MCF 10A (cell line): ENCODE measurements at regions of chr1 and their contacts with region 1.

Region 1: DNA sequence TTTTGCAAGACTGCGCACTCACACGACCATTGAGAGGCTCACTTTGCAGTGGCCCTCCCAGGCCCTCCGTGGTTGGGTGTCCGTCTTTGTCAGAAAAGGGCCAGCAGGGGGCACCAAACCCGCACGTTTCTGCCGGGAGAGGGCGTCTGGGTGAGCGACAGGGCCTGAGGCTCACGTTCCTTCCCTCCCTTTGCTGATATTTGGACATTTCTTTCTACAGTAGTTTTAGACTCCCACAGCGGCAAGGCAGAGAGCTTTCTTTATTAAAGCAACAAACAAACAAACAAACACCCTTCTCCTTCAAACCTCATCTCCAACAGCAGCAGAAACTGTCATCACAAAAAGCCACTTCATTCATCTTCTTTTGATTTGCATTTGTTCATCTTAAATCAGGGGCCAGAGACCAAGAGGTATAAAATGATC is 79.2 kb upstream of the WDR26 start:
- DNase-seq: peak; percentile 97
- H3K4me3 Mint-ChIP-seq: no peak overlapping the region
- H3K27ac Mint-ChIP-seq: no peak overlapping the region
- H3K4me1 Mint-ChIP-seq: peaks cover 14% of the 10 kb centered on the region
- H3K27me3 Mint-ChIP-seq: no peaks in the 10 kb centered on the region
- CTCF ChIP-seq: peak; percentile 100

Region 2: DNA sequence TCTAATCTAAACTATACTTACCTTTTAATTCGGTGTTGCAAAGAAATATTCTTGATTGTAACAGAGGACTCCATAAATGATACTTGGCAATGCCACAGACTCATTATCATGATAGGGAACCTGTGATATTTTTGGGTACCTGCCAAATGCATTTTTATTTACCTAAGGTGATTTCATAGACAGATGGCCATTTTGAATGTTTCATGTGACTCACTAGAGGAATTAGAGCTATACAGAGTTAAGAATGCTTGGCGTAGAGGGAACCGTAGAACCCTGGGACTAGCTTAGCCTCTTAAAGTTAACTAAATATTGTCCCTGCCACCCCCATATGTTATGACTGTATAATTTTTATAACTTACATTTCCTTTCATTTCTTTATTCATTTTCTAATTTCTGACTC is 1562.9 kb before region 1 on chr1:
- CTCF ChIA-PET with region 1: no interaction called
- POLR2A ChIA-PET with region 1: no interaction called
- intact Hi-C with region 1: no loop called
- DNase-seq: peak; percentile 75
- H3K4me3 Mint-ChIP-seq: no peak overlapping the region
- H3K27ac Mint-ChIP-seq: peak overlapping the region; percentile 68
- H3K4me1 Mint-ChIP-seq: peaks cover 17% of the 10 kb centered on the region
- H3K27me3 Mint-ChIP-seq: no peaks in the 10 kb centered on the region
- CTCF ChIP-seq: no peak

Region 3: DNA sequence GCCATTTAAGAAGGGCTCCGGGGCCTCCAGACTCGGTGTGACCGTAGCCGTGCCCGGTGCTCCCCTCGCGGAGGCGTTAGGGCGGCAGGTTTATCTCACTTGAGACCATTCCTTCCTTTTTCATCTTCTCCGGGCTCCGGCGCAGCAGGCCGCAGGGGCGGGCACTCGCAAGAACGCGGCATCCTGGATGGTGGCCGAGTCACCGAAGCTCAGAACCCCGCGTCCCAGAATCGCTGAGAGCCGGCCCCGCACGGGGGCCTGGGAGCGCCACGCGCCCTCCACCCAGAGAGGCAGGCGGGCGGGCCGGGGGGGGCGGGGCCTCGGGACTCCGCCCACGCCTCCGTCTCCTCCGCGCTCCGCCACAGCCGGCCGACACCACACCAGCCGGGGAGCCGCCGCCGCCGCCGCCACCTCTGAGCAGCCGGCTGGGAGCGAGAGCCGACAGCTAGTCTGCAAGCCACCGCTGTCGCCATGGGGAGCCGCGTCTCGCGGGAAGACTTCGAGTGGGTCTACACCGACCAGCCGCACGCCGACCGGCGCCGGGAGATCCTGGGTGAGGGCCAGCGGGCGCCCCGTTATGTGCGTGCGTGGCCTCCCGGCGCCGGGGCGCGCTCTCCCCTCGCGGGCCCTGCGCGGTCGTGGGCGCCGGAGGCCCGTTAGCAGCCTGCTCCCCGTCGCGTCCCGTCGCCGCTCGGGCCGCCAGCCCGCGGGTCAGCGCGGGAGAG is 330.8 kb before region 1 on chr1 and contains the start of gene DEGS1:
- CTCF ChIA-PET with region 1: no interaction called
- POLR2A ChIA-PET with region 1: no interaction called
- intact Hi-C with region 1: no loop called
- DNase-seq: peak; percentile 94
- H3K4me3 Mint-ChIP-seq: peak within 1 kb of the TSS; percentile 85
- H3K27ac Mint-ChIP-seq: peak within 1 kb of the TSS; percentile 91
- H3K4me1 Mint-ChIP-seq: peaks cover 30% of the 10 kb centered on the region
- H3K27me3 Mint-ChIP-seq: no peaks in the 10 kb centered on the region
- CTCF ChIP-seq: no peak
- total RNA-seq, gene DEGS1: 99.1 and 118 TPM in 2 replicates

Region 4: GRCh38 chr1:224534731-224535130 is 20.9 kb after region 1 on chr1:
- CTCF ChIA-PET with region 1: interaction called, 29 read pairs
- POLR2A ChIA-PET with region 1: no interaction called
- intact Hi-C with region 1: no loop called
- DNase-seq: no peak
- H3K4me3 Mint-ChIP-seq: no peak overlapping the region
- H3K27ac Mint-ChIP-seq: no peak overlapping the region
- H3K4me1 Mint-ChIP-seq: peaks cover 4% of the 10 kb centered on the region
- H3K27me3 Mint-ChIP-seq: no peaks in the 10 kb centered on the region
- CTCF ChIP-seq: no peak

Region 5: GRCh38 chr1:224592636-224593582 is 79.1 kb after region 1 on chr1:
- CTCF ChIA-PET with region 1: interaction called, 22 read pairs
- POLR2A ChIA-PET with region 1: no interaction called
- intact Hi-C with region 1: no loop called
- DNase-seq: peak; percentile 86
- H3K4me3 Mint-ChIP-seq: no peak overlapping the region
- H3K27ac Mint-ChIP-seq: no peak overlapping the region
- H3K4me1 Mint-ChIP-seq: peaks cover 15% of the 10 kb centered on the region
- H3K27me3 Mint-ChIP-seq: no peaks in the 10 kb centered on the region
- CTCF ChIP-seq: no peak

Region 6: DNA sequence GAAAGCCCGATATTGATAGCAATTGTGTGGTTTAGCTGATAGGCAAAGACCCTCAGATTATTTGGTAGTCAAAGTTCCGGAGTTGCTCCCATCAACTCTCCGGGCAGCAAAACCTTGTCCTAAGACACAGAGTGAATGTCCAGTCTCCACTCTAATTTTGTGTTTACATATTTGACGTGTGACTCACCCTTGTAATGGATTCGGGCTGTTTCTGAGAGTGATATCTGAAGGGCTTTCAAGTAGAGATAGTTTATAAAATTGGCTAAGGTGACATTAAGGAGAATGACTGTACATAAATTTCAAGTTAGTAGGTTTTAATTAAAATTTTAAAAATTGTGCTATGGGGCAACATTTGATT is 256.5 kb after region 1 on chr1:
- CTCF ChIA-PET with region 1: interaction called, 12 read pairs
- POLR2A ChIA-PET with region 1: interaction called, 3 read pairs
- intact Hi-C with region 1: no loop called
- DNase-seq: peak; percentile 63
- H3K4me3 Mint-ChIP-seq: no peak overlapping the region
- H3K27ac Mint-ChIP-seq: no peak overlapping the region
- H3K4me1 Mint-ChIP-seq: peaks cover 8% of the 10 kb centered on the region
- H3K27me3 Mint-ChIP-seq: peaks cover 22% of the 10 kb centered on the region
- CTCF ChIP-seq: no peak

Region 7: DNA sequence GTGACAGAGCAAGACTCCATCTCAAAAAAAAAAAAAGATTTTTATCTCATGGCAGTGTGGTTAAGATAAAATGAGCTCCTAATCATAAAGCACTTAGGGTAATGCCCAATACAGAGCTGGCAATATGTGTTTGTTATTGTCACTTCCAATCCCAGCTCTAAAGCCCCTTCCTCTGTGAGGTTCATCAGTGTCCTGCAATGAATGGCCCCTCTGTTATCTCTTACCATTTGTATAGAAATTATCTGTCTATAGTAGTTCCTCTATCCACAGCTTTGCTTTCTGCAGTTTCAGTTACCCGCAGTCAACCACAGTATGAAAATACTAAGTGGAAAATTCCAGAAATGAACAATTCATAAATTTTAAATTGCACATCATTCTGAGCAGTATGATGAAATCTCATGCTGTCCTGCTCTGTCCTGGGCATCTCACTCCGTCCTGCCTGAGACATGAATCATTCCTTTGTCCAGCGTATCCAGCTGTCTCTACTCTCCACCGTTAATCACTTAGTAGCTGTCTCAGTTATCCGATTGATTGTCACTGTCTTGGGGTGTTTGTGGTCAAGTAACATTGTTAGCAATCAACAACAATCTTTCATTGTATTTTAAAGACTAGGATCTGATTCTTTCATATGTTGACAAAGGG is 365.5 kb after region 1 on chr1:
- CTCF ChIA-PET with region 1: interaction called, 40 read pairs
- POLR2A ChIA-PET with region 1: no interaction called
- intact Hi-C with region 1: no loop called
- DNase-seq: peak; percentile 68
- H3K4me3 Mint-ChIP-seq: no peak overlapping the region
- H3K27ac Mint-ChIP-seq: no peak overlapping the region
- H3K4me1 Mint-ChIP-seq: peaks cover 31% of the 10 kb centered on the region
- H3K27me3 Mint-ChIP-seq: peaks cover 13% of the 10 kb centered on the region
- CTCF ChIP-seq: no peak

Region 8: DNA sequence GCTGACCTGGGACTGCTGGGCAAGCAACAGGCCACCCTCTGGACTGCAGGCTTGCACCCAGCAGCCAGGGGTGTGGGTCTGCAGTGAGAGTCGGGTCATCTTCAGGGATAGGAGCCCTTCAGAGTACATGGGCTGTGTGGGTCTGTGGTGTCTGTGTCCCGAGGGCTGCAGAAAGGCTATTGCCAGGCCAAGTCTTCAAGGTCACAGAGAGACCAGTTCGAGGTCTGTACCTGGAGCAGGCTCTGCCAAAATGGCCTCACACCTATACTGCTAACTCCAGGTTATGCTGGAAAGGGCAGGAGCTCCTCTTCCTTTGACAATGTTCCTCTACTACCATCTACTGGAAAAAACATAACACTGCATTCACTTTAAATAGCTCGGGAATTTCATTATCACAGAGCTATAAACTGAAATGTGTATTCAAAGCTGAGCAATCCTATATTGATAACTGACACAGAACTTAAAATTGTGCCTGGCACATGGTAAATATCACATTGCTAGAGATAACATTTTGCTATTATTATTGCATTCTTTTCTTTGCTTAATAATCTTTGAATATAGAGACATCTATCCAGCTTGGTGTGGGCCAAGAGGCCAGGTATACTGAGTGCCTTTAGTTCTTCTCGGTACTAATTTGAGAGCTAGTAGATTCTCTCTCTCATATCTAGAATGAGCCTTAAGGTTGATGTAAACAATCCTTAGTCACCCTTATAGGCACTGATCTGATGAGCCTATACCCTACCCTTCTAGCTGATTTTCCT is 408.8 kb after region 1 on chr1:
- CTCF ChIA-PET with region 1: interaction called, 375 read pairs
- POLR2A ChIA-PET with region 1: interaction called, 10 read pairs
- intact Hi-C with region 1: loop called (anchors 1 kb)
- DNase-seq: peak; percentile 76
- H3K4me3 Mint-ChIP-seq: no peak overlapping the region
- H3K27ac Mint-ChIP-seq: no peak overlapping the region
- H3K4me1 Mint-ChIP-seq: peaks cover 4% of the 10 kb centered on the region
- H3K27me3 Mint-ChIP-seq: no peaks in the 10 kb centered on the region
- CTCF ChIP-seq: peak; percentile 99